Adrenal gland (tissue), 19 donors: ENCODE measurements at regions of chr15 and their contacts with region 1.

Region 1: DNA sequence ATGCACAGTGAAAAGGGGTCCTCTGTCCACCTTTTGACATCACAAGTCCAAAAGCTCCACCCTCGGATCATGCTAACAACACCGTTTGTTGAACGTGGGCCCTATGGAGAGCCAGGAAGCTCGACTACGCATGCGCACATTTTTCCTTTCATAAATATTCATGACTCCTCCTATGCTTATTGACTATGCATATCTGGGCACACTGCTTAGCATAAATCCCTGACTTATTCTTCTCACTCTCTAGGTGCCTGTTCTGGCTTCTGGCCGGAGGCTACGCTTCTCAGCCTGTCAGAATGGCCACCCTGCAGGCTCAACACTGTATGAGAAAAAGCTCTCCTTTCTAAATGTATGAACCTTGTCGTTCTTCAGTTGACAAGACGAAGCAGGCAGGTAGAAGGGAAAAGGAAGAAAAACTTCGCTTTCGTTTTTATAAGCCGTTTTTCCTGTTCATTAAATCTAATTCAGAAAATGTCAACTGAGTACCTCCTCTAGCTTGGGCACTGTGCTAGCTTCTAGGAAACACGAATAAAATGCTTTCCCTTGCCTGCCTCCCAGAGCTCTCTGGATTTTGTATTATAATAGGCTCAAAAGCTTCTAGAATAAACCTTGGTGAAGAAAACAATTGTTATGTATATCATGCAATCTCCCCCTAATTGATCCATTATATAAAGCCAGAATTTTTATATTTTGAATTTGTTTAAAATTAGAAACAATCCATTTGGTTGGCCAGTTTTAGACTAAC is 207.7 kb downstream of the ATP10A start:
- DNase-seq: no peak
- H3K4me3 ChIP-seq: no peak overlapping the region
- H3K27ac ChIP-seq: no peak overlapping the region
- H3K4me1 ChIP-seq: no peaks in the 10 kb centered on the region
- H3K27me3 ChIP-seq: no peaks in the 10 kb centered on the region
- CTCF ChIP-seq: no peak
- POLR2A ChIP-seq: no peak

Region 2: DNA sequence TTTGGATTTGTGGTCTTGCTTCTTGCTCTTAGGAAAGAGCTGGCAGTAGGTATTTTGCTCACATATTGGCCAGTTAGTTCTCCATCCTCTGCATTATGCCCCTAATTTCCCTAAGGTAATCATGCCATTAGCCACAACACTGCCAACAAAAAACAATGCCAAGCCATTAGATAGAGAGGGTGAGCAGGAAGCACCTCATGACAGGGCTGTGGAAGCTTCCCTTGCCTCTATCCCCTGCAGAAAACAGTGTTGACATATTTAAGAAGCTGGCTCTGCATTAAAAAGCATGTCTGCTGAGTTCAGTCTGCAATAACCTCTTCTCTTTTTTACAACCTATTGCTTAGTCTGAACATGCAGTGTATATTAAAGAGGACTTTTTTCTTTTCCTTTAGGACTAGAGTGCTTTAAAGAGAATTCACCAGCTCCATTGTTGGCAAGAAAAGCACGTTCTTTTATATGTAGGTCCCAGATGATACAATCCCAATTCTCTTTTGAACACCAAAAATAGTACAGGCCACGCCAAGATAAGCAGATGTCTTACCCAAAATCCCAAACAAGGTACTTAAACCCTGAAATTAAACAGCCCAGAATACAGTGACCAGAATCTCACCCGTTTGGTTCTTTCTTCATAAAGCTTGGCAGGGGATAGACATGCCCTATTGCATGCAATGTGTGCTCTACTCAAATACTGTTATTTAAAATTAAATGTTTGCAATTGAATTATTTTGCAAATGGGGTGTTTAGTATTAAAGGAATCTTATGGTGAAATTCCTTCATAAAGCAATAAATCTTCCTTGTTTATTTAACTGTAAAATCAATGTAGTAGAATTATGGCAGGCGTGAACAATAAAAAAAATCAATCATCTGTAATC is 122.9 kb before region 1 on chr15:
- intact Hi-C with region 1: no loop called
- DNase-seq: no peak
- H3K4me3 ChIP-seq: no peak overlapping the region
- H3K27ac ChIP-seq: no peak overlapping the region
- H3K4me1 ChIP-seq: no peaks in the 10 kb centered on the region
- H3K27me3 ChIP-seq: no peaks in the 10 kb centered on the region
- CTCF ChIP-seq: no peak
- POLR2A ChIP-seq: no peak

Region 3: GRCh38 chr15:25596644-25597562 is 58.5 kb before region 1 on chr15:
- intact Hi-C with region 1: loop called in 1 of 2 experiments (anchors 10 kb)
- DNase-seq: no peak
- H3K4me3 ChIP-seq: no peak overlapping the region
- H3K27ac ChIP-seq: peak overlapping the region in 1 of 5 donors; percentile 11
- H3K4me1 ChIP-seq: no peaks in the 10 kb centered on the region
- H3K27me3 ChIP-seq: no peaks in the 10 kb centered on the region
- CTCF ChIP-seq: no peak
- POLR2A ChIP-seq: no peak